Activated T-helper 1 cell treated with anti-CD3 and anti-CD28 coated beads, Interleukin-12 subunit alpha, Interleukin-12 subunit beta, Interleukin-2, Interleukin-4 antibody, amounts not matched to agents 30 ng/mL and 10 ng/mL and 1 ng/mL, durations not matched to agents 14 hours and 24 hours and 36 hours (primary cell): ENCODE measurements at regions of chr11 and their contacts with region 1.

Region 1: DNA sequence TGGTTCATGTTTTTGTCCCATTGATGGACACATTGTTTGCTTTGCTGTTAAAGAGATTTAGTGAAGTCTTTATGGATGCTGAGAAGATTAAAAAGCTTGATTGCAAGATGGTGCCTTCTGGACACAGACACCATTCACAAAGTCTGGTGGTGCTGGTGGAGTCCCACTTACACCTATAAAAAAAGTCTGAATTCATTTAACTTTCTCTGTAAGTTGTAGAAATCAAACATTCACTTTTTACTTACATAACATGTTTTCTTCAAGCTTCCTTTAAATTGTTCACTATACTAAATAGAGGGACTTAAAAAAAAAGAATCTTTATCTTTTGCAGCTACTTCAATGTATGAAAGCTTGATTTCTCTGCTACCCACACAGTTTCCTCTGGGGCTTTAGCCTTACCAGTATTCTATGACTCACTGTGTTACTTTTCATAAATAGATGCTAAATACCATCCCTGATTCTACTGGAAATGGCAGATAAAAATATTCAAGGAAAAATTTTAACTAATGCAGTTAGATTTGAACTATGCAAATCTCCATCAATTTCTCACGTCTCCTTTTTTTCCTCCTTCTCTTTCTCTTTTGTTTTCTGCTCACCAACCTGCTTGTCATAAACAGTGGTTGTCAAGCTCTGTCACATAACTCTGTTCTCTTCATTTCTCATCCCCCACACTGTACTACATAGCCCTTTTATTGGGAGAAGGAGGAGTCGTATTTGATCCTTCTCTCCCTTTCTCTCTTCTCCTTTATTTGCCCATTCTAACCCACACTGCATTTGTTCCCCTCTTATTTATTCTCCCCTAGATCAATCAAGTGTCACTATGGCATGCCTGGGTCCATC is 89.7 kb downstream of the FAM76B start:
- DNase-seq: no peak
- H3K4me3 Mint-ChIP-seq: peak overlapping the region; percentile 73
- H3K27ac Mint-ChIP-seq: peak overlapping the region; percentile 95
- H3K4me1 Mint-ChIP-seq: peaks cover 68% of the 10 kb centered on the region
- H3K27me3 Mint-ChIP-seq: no peaks in the 10 kb centered on the region

Region 2: GRCh38 chr11:95337175-95337957 is 362.5 kb before region 1 on chr11:
- intact Hi-C with region 1: loop called (anchors 2 kb)
- DNase-seq: peak; percentile 41
- H3K4me3 Mint-ChIP-seq: no peak overlapping the region
- H3K27ac Mint-ChIP-seq: no peak overlapping the region
- H3K4me1 Mint-ChIP-seq: no peaks in the 10 kb centered on the region
- H3K27me3 Mint-ChIP-seq: peaks cover 8% of the 10 kb centered on the region

Region 3: GRCh38 chr11:95485115-95485900 is 214.5 kb before region 1 on chr11:
- intact Hi-C with region 1: no loop called
- DNase-seq: no peak
- H3K4me3 Mint-ChIP-seq: no peak overlapping the region
- H3K27ac Mint-ChIP-seq: no peak overlapping the region
- H3K4me1 Mint-ChIP-seq: peaks cover 11% of the 10 kb centered on the region
- H3K27me3 Mint-ChIP-seq: peaks cover 5% of the 10 kb centered on the region

Region 4: DNA sequence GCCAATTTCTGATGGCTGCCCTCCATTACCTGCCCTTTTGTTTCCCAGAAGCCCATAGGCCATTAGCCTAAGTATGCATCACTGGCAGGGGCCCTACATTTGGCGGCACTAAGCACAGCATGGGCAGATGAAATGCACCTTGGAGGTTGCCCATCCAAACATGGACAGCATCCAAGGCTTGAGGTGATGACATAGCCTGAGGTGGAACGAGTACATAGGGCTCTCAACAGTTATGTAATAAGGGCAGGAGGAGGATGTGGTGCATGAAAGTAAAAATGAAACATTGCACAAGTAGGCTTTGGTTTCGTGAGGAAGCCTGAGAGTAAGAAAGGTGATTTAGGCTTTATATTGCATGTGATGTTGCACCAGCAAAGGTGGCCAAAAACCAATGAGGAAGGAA is 58.4 kb before region 1 on chr11:
- intact Hi-C with region 1: loop called (anchors 2 kb)
- DNase-seq: peak; percentile 47
- H3K4me3 Mint-ChIP-seq: no peak overlapping the region
- H3K27ac Mint-ChIP-seq: peak overlapping the region; percentile 70
- H3K4me1 Mint-ChIP-seq: peaks cover 24% of the 10 kb centered on the region
- H3K27me3 Mint-ChIP-seq: no peaks in the 10 kb centered on the region

Region 5: GRCh38 chr11:95671768-95672167 is 28.1 kb before region 1 on chr11:
- intact Hi-C with region 1: loop called (anchors 1 kb)
- DNase-seq: no peak
- H3K4me3 Mint-ChIP-seq: no peak overlapping the region
- H3K27ac Mint-ChIP-seq: no peak overlapping the region
- H3K4me1 Mint-ChIP-seq: peaks cover 27% of the 10 kb centered on the region
- H3K27me3 Mint-ChIP-seq: no peaks in the 10 kb centered on the region

Region 6: DNA sequence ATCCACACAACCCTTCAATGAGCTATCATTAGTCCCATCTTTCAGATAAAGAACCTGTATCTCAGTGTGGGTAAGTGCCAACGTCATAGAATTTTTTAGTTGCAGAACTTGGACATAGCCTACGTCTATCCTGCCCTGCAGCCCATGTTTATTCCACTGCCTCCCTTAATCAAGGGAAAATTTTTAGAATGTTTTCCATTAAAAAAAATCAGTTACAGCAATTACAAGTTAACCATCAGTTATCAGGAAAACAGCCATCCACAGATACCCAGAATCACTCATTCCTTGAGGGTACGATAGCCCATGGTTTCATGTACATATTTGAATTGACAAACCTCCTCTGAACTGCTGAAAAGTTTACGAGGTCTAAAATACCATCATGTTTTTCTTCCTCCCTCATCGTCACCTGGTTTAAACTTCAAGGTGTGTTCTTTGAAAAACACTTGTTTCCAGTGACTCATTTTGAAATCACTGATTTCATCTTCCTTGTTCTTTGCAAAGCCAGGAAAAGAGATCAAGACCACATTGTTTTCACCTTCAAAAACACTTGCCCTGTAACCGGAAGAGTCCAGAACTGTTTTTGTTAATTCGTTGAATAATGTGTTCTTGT is 11.2 kb before region 1 on chr11:
- intact Hi-C with region 1: loop called (anchors 1 kb)
- DNase-seq: peak; percentile 34
- H3K4me3 Mint-ChIP-seq: no peak overlapping the region
- H3K27ac Mint-ChIP-seq: no peak overlapping the region
- H3K4me1 Mint-ChIP-seq: peaks cover 26% of the 10 kb centered on the region
- H3K27me3 Mint-ChIP-seq: no peaks in the 10 kb centered on the region